Psoas muscle (tissue), 8 donors: ENCODE measurements at regions of chr2 and their contacts with region 1.

Region 1: DNA sequence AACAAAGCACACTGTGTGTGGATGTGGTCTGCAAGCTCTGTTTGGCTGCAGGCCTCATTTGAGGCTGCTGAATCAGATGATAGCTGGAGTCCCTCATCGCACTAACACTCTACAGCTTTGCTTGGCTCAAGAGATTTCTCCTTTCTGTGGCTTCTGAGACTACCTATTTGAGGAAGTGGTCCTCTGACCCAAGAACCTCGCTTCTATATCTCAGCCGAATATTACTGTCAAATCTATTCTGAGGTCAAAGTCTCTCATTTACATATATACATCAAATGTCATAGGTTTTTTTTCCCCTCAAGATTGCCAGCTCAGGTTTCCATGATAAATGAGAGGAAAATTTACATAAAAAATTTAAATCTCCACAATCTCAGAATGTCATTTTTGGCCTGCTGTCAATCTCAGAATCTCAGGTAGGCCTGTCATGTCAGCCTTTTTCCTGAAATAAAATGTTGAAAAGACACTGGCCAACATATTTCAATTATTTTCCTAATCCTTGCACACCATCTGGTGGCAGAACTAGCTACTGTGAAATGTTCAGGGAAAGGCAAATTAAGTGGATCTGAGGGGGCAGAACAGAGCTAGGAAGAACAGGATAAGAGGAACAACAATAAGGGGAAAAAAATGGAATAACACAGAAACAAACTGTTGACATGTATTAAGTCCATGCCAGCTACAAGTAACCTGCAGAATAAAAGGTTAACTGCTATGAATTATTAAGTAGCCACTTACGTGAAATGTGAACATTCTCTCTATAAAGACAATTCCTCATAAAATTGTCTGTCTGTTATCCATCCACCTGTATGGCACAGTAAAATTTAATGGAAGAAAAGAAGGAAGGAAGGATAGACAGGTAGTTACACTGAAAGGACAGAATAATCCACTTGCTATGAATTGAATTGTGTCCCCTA is 39.3 kb downstream of the AP1S3 start:
- DNase-seq: no peak
- ATAC-seq: no peak
- H3K4me3 ChIP-seq: no peak overlapping the region
- H3K27ac ChIP-seq: no peak overlapping the region
- H3K4me1 ChIP-seq: no peaks in the 10 kb centered on the region
- H3K27me3 ChIP-seq: no peaks in the 10 kb centered on the region
- CTCF ChIP-seq: peak; percentile 49

Region 2: GRCh38 chr2:222976521-222977076 is 821.5 kb before region 1 on chr2:
- intact Hi-C with region 1: loop called (anchors 2 to 5 kb)
- DNase-seq: no peak
- ATAC-seq: no peak
- H3K4me3 ChIP-seq: no peak overlapping the region
- H3K27ac ChIP-seq: no peak overlapping the region
- H3K4me1 ChIP-seq: no peaks in the 10 kb centered on the region
- H3K27me3 ChIP-seq: no peaks in the 10 kb centered on the region
- CTCF ChIP-seq: no peak

Region 3: GRCh38 chr2:223692191-223692947 is 105.7 kb before region 1 on chr2:
- intact Hi-C with region 1: loop called in 1 of 2 experiments (anchors 5 kb)
- DNase-seq: no peak
- ATAC-seq: no peak
- H3K4me3 ChIP-seq: no peak overlapping the region
- H3K27ac ChIP-seq: no peak overlapping the region
- H3K4me1 ChIP-seq: no peaks in the 10 kb centered on the region
- H3K27me3 ChIP-seq: no peaks in the 10 kb centered on the region
- CTCF ChIP-seq: peak; percentile 39

Region 4: GRCh38 chr2:223744573-223744972 is 53.5 kb before region 1 on chr2:
- intact Hi-C with region 1: no loop called
- DNase-seq: no peak
- ATAC-seq: no peak
- H3K4me3 ChIP-seq: no peak overlapping the region
- H3K27ac ChIP-seq: no peak overlapping the region
- H3K4me1 ChIP-seq: no peaks in the 10 kb centered on the region
- H3K27me3 ChIP-seq: no peaks in the 10 kb centered on the region
- CTCF ChIP-seq: no peak